ENCODE measurements at regions of chr6 and their contacts with region 1.

Region 1: DNA sequence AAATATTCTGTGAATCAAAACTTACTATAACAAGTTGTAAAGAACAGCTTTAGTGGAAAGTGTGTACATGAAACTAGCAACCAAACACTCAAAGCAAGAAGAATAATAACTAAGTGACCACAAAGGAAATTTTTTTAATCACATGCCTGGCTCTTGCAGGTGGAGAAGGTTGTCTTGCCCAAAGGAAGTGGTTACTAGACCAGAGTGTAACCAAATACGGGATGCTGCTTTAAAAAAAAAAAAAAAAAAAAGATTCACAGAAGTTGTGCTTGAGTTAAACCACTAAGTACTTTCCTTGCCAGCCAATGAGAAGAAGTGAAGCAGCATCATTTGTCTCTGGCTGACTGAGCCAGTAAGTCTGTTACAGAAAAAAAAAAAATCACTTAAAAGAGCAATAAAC is 19.1 kb upstream of the HLA-DQB1 start:
- DNase-seq: no peak
- H3K4me3 Mint-ChIP-seq: no peak overlapping the region
- H3K27ac Mint-ChIP-seq: no peak overlapping the region
- H3K4me1 Mint-ChIP-seq: no peaks in the 10 kb centered on the region
- H3K27me3 Mint-ChIP-seq: peaks cover 90% of the 10 kb centered on the region
- CTCF ChIP-seq: no peak

Region 2: DNA sequence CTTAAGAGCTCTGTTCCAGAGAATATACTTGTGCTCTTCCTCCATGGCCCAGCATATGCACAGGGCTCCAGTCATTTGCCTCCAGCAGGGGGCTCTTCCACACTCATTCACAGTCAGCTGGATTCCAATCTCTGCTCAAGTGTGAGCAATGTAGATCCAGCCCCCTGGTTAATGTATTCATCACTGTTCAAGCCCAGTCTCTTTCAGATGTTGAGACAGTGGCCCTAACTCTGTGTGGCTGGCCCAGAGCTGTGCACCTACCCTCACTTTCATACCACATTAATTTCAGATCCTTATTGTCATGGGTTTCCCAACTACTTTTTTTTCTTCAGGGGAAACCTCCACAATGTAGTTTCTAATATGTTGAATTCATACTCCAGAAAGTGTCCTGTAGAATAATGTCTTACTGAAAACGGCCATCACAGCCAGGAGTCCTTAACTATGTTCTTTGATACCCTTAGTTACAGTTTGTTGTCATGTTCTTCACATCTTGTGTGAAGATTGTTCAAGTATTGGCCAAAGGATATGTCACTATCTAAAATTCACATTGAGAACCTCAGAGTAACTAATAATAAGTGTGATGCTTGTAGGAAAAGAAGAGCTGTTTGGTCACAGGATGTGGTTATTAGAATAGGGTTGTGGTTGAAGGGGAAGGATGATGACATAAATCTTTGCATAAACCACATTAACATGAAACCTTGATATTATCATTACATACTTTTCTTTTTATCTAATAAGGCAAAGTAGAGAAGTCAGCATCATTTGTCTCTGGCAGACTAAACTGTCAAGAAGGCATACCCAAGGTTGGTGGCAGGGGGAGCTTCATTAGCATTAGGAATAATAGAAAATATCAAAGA is 62.8 kb before region 1 on chr6:
- CTCF ChIA-PET with region 1: no interaction called
- POLR2A ChIA-PET with region 1: no interaction called
- intact Hi-C with region 1: loop called (anchors 10 kb)
- DNase-seq: peak; percentile 37
- H3K4me3 Mint-ChIP-seq: no peak overlapping the region
- H3K27ac Mint-ChIP-seq: no peak overlapping the region
- H3K4me1 Mint-ChIP-seq: peaks cover 7% of the 10 kb centered on the region
- H3K27me3 Mint-ChIP-seq: peaks cover 12% of the 10 kb centered on the region
- CTCF ChIP-seq: no peak

Region 3: DNA sequence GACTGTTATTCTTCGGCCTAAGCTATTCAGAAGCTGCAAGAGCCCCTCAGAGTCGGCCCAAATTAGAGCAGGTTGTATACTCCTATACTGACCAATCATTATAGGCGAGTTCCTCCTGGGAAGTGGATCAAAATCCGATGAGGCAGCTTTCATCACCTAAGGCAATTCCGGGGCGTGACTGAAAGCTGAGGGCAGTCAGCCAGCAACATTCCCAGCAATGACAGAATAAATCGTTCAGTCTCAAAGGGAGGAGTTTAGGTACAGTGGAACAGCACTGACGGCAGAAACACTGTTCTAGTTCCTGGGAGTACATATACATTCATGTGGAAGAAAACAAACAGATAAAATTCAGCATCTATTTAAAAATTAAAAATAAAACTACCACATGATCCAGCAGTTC is 67.0 kb after region 1 on chr6:
- CTCF ChIA-PET with region 1: no interaction called
- POLR2A ChIA-PET with region 1: no interaction called
- intact Hi-C with region 1: no loop called
- DNase-seq: peak; percentile 12
- H3K4me3 Mint-ChIP-seq: no peak overlapping the region
- H3K27ac Mint-ChIP-seq: no peak overlapping the region
- H3K4me1 Mint-ChIP-seq: no peaks in the 10 kb centered on the region
- H3K27me3 Mint-ChIP-seq: peaks cover 97% of the 10 kb centered on the region
- CTCF ChIP-seq: no peak

Measured in MCF 10A (cell line).